ENCODE measurements at regions of chr12 and their contacts with region 1.

Region 1: DNA sequence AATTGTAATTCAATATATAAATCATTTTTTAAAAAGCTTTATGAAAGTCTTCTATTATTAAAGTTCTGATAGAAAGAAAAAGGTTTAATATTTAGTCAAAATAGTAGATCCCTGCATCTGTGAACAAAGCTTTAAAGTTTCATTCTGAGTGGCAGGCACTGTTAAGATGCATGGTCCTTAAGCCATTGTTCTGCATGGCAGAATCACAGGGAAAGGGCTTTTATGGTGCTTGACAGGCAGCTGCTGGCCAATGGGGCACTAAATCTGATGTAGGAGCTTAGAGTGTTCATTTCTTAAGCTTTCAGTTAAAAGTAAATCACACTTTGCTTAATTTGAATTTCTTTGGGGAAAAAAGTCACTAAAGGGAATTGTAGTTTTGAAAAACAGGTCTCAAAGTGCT is 148.2 kb downstream of the PLEKHA5 start:
- DNase-seq: no peak
- H3K4me3 ChIP-seq: no peak overlapping the region
- H3K27ac ChIP-seq: peak overlapping the region; percentile 14 to 56; a peak in 1 of 4 replicates
- H3K4me1 ChIP-seq: peaks cover 13 to 32% of the 10 kb centered on the region in 2 experiments
- H3K27me3 ChIP-seq: no peaks in the 10 kb centered on the region
- CTCF ChIP-seq: no peak
- EP300 ChIP-seq: no peak
- RAD21 ChIP-seq: no peak

Region 2: DNA sequence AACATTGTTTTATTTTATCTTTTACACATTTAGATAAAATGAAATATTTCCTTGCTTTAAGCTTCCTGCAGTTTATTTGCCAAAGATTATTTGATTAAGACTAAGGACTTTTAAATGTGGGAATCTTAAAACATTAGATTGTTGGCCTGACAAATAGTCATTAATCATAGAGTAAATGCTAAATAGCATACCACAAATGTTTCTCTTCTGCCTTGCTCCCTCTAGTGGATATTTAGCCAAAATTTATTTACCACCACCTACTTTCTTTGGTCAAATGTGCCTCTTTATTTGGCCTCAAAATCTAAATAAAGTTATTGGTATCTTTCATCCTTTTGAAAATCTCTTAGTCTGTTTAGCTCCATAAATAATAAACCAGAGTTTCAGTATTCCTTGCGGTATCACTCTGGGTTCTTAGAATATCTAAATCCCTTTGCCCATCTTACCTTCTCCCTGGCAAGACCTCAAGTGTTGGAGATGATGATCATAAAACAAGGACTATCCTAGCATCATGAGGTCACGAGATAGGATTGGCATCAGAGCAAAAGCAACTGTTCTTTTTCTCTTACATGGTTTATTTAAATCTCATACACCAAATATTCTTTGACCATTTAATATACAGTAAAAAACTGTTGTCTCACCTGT is 11.0 kb after region 1 on chr12:
- CTCF ChIA-PET with region 1: interaction called, 16 read pairs
- POLR2A ChIA-PET with region 1: no interaction called
- DNase-seq: peak; percentile 51
- H3K4me3 ChIP-seq: no peak overlapping the region; a peak in 1 of 4 replicates
- H3K27ac ChIP-seq: peak overlapping the region in 1 of 2 experiments; percentile 14; a peak in 2 of 4 replicates
- H3K4me1 ChIP-seq: no peaks in the 10 kb centered on the region; a peak in 1 of 4 replicates
- H3K27me3 ChIP-seq: no peaks in the 10 kb centered on the region
- CTCF ChIP-seq: peak; percentile 86
- EP300 ChIP-seq: no peak
- RAD21 ChIP-seq: peak; percentile 71